Sigmoid colon (tissue), 7 donors: ENCODE measurements at regions of chr6 and their contacts with region 1.

Region 1: GRCh38 chr6:163419413-163420288 is 5.1 kb downstream of the QKI start:
- DNase-seq: no peak
- H3K4me3 ChIP-seq: peak overlapping the region in 3 of 4 donors; percentile 0 to 100 (median 75)
- H3K27ac ChIP-seq: peak overlapping the region; percentile 41 to 99 (median 96)
- H3K4me1 ChIP-seq: peaks cover 0 to 75% (median 61%) of the 10 kb centered on the region in 4 donors
- H3K27me3 ChIP-seq: no peaks in the 10 kb centered on the region
- CTCF ChIP-seq: no peak
- EP300 ChIP-seq: no peak
- POLR2A ChIP-seq: no peak

Region 2: GRCh38 chr6:163474581-163474980 is 54.9 kb after region 1 on chr6:
- intact Hi-C with region 1: no loop called
- DNase-seq: no peak
- H3K4me3 ChIP-seq: no peak overlapping the region
- H3K27ac ChIP-seq: no peak overlapping the region
- H3K4me1 ChIP-seq: no peaks in the 10 kb centered on the region
- H3K27me3 ChIP-seq: no peaks in the 10 kb centered on the region
- CTCF ChIP-seq: no peak
- EP300 ChIP-seq: no peak
- POLR2A ChIP-seq: no peak

Region 3: DNA sequence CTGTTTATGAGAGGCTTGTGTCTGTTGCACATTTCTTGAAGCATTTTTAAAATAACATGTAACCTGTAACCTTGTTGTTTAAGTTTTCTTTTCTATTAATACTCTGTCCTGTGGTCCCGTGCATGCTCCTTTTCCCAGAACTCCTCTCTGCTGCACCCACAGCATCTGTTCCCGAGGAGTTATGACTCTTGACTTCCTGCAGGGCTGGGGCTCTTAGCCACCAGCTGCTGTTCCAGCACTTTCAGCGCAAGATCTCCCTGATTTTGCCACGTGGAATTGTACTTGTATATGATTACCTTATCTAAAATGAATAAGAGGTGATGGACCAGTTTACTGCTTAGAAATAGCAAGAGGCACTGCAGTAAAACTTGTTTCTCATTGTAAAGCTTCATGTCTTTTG is 145.5 kb after region 1 on chr6:
- intact Hi-C with region 1: loop called (anchors 5 kb)
- DNase-seq: no peak
- H3K4me3 ChIP-seq: no peak overlapping the region
- H3K27ac ChIP-seq: no peak overlapping the region
- H3K4me1 ChIP-seq: peaks cover 0 to 8% (median 2%) of the 10 kb centered on the region in 4 donors
- H3K27me3 ChIP-seq: no peaks in the 10 kb centered on the region
- CTCF ChIP-seq: no peak
- EP300 ChIP-seq: no peak
- POLR2A ChIP-seq: no peak

Region 4: DNA sequence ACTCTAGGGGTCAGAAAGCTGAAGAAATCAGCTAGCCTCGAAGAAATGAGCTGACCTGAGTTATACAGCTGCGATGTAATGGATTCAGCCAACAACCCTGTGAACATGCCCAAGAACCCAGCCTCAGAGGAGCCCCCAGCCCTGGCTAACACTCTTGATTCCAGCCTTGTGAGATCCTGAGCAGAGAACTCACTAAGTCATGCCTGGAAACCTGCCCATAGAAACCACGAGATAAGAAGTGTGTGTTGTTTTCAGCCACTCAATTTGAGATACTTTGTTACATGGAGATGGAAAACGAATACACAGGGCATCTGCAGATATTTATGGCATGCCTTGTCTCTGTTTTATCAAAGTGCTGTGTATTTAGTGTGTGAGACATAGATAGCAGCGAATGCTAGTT is 260.1 kb after region 1 on chr6:
- intact Hi-C with region 1: no loop called
- DNase-seq: no peak
- H3K4me3 ChIP-seq: no peak overlapping the region
- H3K27ac ChIP-seq: no peak overlapping the region
- H3K4me1 ChIP-seq: no peaks in the 10 kb centered on the region
- H3K27me3 ChIP-seq: no peaks in the 10 kb centered on the region
- CTCF ChIP-seq: no peak
- EP300 ChIP-seq: no peak
- POLR2A ChIP-seq: no peak